Ascending aorta (tissue), 2 donors: ENCODE measurements at regions of chr1 and their contacts with region 1.

Region 1: GRCh38 chr1:172144445-172145061 is 275.9 kb upstream of the C1orf105 start:
- DNase-seq: peak; percentile 69 to 94
- H3K4me3 ChIP-seq: peak overlapping the region; percentile 61 to 85
- H3K27ac ChIP-seq: peak overlapping the region; percentile 92 to 95
- H3K4me1 ChIP-seq: peaks cover 0 to 4% of the 10 kb centered on the region in 2 donors
- H3K27me3 ChIP-seq: no peaks in the 10 kb centered on the region
- CTCF ChIP-seq: no peak

Region 2: GRCh38 chr1:171741872-171742576 is 402.5 kb before region 1 on chr1 and contains the start of gene VAMP4:
- intact Hi-C with region 1: loop called (anchors 5 kb)
- DNase-seq: peak; percentile 51 to 94
- H3K4me3 ChIP-seq: peak within 1 kb of the TSS; percentile 90 to 96
- H3K27ac ChIP-seq: peak within 1 kb of the TSS; percentile 95 to 97
- H3K4me1 ChIP-seq: peaks cover 9 to 41% of the 10 kb centered on the region in 2 donors
- H3K27me3 ChIP-seq: no peaks in the 10 kb centered on the region
- CTCF ChIP-seq: no peak
- total RNA-seq, gene VAMP4: 3.6 TPM

Region 3: DNA sequence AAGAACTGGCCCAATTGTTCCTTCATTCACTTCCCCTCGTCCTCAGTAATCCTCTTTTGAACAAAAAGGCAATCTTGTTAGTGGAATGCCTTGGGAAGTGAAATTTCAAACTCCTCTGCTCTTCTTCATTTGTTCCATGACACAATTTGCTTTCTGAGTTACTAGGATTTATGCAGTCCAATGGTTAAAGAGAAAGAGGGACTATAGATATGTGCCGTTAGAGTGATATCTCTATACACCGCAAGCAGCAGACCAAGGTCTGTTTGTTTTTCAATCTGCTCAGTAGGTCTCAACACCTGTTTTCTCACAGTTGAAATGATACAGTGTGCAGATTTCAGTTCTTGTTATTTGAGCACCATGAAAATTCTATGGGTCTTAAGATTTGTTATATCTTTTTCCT is 59.2 kb before region 1 on chr1:
- intact Hi-C with region 1: no loop called
- DNase-seq: no peak
- H3K4me3 ChIP-seq: no peak overlapping the region
- H3K27ac ChIP-seq: no peak overlapping the region
- H3K4me1 ChIP-seq: no peaks in the 10 kb centered on the region
- H3K27me3 ChIP-seq: no peaks in the 10 kb centered on the region
- CTCF ChIP-seq: no peak

Region 4: GRCh38 chr1:172180501-172181285 is 36.1 kb after region 1 on chr1:
- intact Hi-C with region 1: loop called (anchors 2 kb)
- DNase-seq: peak in 1 of 2 donors; percentile 66
- H3K4me3 ChIP-seq: peak overlapping the region; percentile 34 to 35
- H3K27ac ChIP-seq: peak overlapping the region; percentile 73 to 84
- H3K4me1 ChIP-seq: peaks cover 0 to 14% of the 10 kb centered on the region in 2 donors
- H3K27me3 ChIP-seq: no peaks in the 10 kb centered on the region
- CTCF ChIP-seq: no peak